ENCODE measurements at regions of chr2 and their contacts with region 1.

Region 1: GRCh38 chr2:206971805-206972204 is 32.5 kb downstream of the CPO start:
- DNase-seq: peak; percentile 29
- ATAC-seq: no peak

Region 2: GRCh38 chr2:206800506-206801417 is 171.0 kb before region 1 on chr2:
- intact Hi-C with region 1: loop called (anchors 10 kb)
- DNase-seq: peak; percentile 36
- ATAC-seq: peak; percentile 84

Region 3: GRCh38 chr2:206915121-206915520 is 56.7 kb before region 1 on chr2:
- intact Hi-C with region 1: no loop called
- DNase-seq: no peak
- ATAC-seq: no peak